ENCODE measurements at regions of chr4 and their contacts with region 1.

Region 1: DNA sequence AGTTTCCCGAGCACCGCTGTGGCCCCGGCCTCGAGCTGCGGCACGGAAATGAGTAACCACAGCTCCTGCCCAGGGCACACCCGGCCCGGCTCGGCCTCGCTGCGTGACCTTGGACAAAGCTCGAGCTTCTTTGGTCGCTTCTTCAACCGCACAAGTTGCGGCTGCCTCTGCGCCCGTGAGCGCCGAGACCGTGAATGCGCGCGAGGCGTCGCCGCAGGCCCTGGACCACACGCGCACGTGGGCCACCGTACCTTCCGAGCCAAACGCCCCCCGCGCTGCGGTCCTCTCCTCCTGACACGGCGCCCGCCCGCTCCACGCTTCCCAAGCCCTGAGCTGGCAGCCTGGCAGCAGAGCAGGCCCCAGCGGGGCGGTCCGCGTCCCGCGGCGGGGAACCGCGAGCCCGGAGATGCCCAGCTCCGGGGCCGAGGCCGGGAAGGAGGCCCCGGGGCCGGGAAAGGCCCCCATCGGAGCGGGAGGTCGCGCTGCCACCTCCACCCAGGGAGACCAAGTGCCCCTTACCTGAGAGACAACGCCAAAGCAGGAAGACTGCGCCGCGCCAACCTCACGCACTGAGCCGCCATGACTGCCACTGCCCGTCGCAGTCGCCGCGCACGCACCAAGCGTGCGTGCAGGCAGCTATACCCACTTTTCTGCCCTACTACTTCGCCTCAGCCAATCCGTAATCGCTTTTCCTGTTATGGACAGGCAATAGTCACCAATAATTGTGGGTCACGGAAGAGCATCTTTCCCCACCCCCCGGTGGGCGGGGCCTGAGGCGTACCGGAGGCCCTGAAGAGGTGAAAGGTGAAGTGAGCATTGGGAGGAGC is at the start of gene GRPEL1:
- DNase-seq: peak; percentile 100
- ATAC-seq: peak; percentile 96
- H3K4me3 Mint-ChIP-seq: peak within 1 kb of the TSS; percentile 97
- H3K27ac Mint-ChIP-seq: peak within 1 kb of the TSS; percentile 92
- H3K4me1 Mint-ChIP-seq: peaks cover 39% of the 10 kb centered on the region
- H3K27me3 Mint-ChIP-seq: peaks cover 12% of the 10 kb centered on the region
- total RNA-seq, gene GRPEL1: 43.1 to 49.4 TPM

Region 2: DNA sequence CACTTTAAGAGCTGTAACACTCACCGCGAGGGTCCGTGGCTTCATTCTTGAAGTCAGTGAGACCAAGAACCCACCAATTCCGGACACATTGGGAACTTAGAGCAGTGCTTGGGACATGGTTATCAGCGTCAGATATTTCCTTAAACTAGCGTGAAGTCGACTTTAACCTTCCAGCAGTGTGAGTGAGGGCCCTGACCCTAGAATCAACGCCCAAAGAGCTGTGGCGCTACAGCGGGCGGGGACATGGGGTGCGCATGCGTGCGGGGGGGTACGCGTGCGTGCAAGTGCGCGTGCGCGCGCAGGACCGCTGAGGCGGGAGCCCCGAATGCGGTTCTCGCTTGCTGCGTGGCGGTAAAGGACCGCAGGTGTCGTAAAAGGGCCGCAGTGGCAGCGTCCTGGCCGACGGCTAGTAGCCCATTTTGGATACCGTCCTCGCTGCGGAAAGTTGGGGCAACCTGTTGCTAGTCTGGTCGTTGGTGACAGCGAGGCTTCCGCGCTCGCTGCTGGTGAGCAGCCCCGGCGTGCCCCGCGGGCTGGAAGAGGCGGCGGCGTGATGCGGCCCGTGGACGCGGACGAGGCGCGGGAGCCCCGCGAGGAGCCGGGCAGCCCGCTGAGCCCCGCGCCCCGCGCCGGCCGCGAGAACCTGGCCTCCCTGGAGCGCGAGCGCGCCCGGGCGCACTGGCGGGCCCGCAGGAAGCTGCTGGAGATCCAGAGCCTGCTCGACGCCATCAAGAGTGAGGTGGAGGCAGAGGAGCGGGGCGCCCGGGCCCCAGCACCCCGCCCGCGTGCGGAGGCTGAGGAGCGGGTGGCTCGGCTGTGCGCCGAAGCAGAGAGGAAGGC is 393.8 kb before region 1 on chr4:
- CTCF ChIA-PET with region 1: interaction called, 4 read pairs
- POLR2A ChIA-PET with region 1: interaction called, 14 read pairs
- DNase-seq: peak; percentile 96
- ATAC-seq: peak; percentile 75
- H3K4me3 Mint-ChIP-seq: peak overlapping the region; percentile 94
- H3K27ac Mint-ChIP-seq: peak overlapping the region; percentile 100
- H3K4me1 Mint-ChIP-seq: peaks cover 45% of the 10 kb centered on the region
- H3K27me3 Mint-ChIP-seq: no peaks in the 10 kb centered on the region

Region 3: GRCh38 chr4:6898763-6899162 is 168.9 kb before region 1 on chr4:
- CTCF ChIA-PET with region 1: interaction called, 11 read pairs
- POLR2A ChIA-PET with region 1: interaction called, 3 read pairs
- DNase-seq: no peak
- ATAC-seq: peak; percentile 31
- H3K4me3 Mint-ChIP-seq: peak overlapping the region; percentile 30
- H3K27ac Mint-ChIP-seq: peak overlapping the region; percentile 95
- H3K4me1 Mint-ChIP-seq: peaks cover 41% of the 10 kb centered on the region
- H3K27me3 Mint-ChIP-seq: no peaks in the 10 kb centered on the region

Region 4: GRCh38 chr4:6986781-6987587 is 80.7 kb before region 1 on chr4:
- CTCF ChIA-PET with region 1: interaction called, 7 read pairs
- POLR2A ChIA-PET with region 1: interaction called, 12 read pairs
- DNase-seq: peak; percentile 95
- ATAC-seq: peak; percentile 94
- H3K4me3 Mint-ChIP-seq: peak overlapping the region; percentile 97
- H3K27ac Mint-ChIP-seq: peak overlapping the region; percentile 93
- H3K4me1 Mint-ChIP-seq: peaks cover 67% of the 10 kb centered on the region
- H3K27me3 Mint-ChIP-seq: no peaks in the 10 kb centered on the region

Region 5: GRCh38 chr4:7052923-7053715 is 14.5 kb before region 1 on chr4:
- CTCF ChIA-PET with region 1: interaction called, 27 read pairs
- POLR2A ChIA-PET with region 1: interaction called, 13 read pairs
- DNase-seq: no peak
- ATAC-seq: peak; percentile 24
- H3K4me3 Mint-ChIP-seq: no peak overlapping the region
- H3K27ac Mint-ChIP-seq: peak overlapping the region; percentile 63
- H3K4me1 Mint-ChIP-seq: peaks cover 21% of the 10 kb centered on the region
- H3K27me3 Mint-ChIP-seq: no peaks in the 10 kb centered on the region

Measured in activated CD8-positive, alpha-beta T cell treated with anti-CD3 and anti-CD28 coated beads, Interleukin-2, amount 10 ng/mL, durations not matched to agents 7 days and 5 days (primary cell).